Gastrocnemius medialis (tissue), 4 donors: ENCODE measurements at regions of chr15 and their contacts with region 1.

Region 1: DNA sequence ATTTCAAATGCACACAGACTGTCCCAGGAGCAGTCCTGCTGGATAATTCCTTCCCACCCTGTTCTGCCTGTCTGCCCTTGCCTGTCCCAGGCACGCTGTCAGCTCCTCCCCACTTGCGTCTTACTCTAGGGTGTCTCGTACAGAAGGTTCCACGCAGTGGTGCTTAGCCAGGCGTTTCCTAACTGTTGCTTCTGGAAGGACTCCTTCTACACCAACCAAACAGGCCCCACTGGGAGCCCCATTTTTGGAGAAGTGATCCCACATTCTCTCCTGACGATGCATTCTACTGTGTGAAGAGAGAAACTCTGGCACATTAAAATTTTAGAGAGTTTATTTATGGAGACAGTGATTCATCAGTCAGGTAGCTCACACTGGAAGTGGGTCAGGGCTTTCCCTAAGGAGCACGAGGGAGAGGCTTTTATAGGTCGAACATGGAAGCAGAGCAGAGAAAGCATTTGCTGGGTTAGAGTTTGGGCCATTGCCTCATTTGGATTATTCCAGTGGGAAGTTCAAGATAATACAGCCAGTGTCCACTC is 164.0 kb downstream of the SV2B start:
- DNase-seq: peak; percentile 76 to 90
- ATAC-seq: peak; percentile 96 to 98
- H3K4me3 ChIP-seq: peak overlapping the region; percentile 8 to 48 (median 34)
- H3K27ac ChIP-seq: peak overlapping the region; percentile 72 to 80 (median 76)
- H3K4me1 ChIP-seq: peaks cover 9 to 16% of the 10 kb centered on the region in 2 donors
- H3K27me3 ChIP-seq: no peaks in the 10 kb centered on the region
- CTCF ChIP-seq: no peak
- POLR2A ChIP-seq: peak; percentile 27 to 65

Region 2: DNA sequence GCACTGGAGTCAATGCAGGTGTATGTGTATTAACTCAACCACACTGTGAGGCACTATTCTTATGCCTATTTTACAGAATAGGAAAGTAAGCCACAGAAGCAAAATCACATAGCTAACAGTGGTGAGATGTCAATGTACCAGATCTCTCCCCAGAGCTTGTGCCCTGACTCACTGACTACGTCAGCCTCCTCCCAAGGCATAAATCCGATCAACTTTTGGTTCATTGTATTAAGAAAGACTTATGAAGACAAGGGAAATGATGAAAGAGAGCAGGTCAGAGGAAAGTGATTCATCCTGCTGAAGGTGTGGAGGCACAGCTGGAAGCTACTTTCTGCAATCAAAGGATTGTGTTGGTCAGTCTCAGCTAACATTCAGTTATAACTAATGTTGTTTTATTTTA is 197.0 kb before region 1 on chr15:
- in situ Hi-C with region 1: no loop called
- intact Hi-C with region 1: loop called (anchors 1 kb)
- DNase-seq: no peak
- ATAC-seq: no peak
- H3K4me3 ChIP-seq: no peak overlapping the region
- H3K27ac ChIP-seq: no peak overlapping the region
- H3K4me1 ChIP-seq: no peaks in the 10 kb centered on the region
- H3K27me3 ChIP-seq: peaks cover 0 to 7% (median 0%) of the 10 kb centered on the region in 3 donors
- CTCF ChIP-seq: no peak
- POLR2A ChIP-seq: no peak

Region 3: GRCh38 chr15:91118796-91119590 is 145.1 kb before region 1 on chr15:
- in situ Hi-C with region 1: no loop called
- intact Hi-C with region 1: loop called (anchors 1 kb)
- DNase-seq: peak; percentile 48 to 66
- ATAC-seq: peak; percentile 84 to 94
- H3K4me3 ChIP-seq: no peak overlapping the region
- H3K27ac ChIP-seq: peak overlapping the region; percentile 46 to 85 (median 57)
- H3K4me1 ChIP-seq: peaks cover 13 to 36% of the 10 kb centered on the region in 2 donors
- H3K27me3 ChIP-seq: no peaks in the 10 kb centered on the region
- CTCF ChIP-seq: no peak
- POLR2A ChIP-seq: no peak

Region 4: GRCh38 chr15:91216000-91216399 is 48.1 kb before region 1 on chr15:
- in situ Hi-C with region 1: no loop called
- intact Hi-C with region 1: loop called (anchors 2 kb)
- DNase-seq: peak; percentile 54 to 66
- ATAC-seq: peak; percentile 96
- H3K4me3 ChIP-seq: no peak overlapping the region
- H3K27ac ChIP-seq: peak overlapping the region; percentile 46 to 74 (median 71)
- H3K4me1 ChIP-seq: peaks cover 11 to 22% of the 10 kb centered on the region in 2 donors
- H3K27me3 ChIP-seq: no peaks in the 10 kb centered on the region
- CTCF ChIP-seq: no peak
- POLR2A ChIP-seq: no peak

Region 5: GRCh38 chr15:91320101-91320500 is 56.0 kb after region 1 on chr15:
- in situ Hi-C with region 1: no loop called
- intact Hi-C with region 1: no loop called
- DNase-seq: no peak
- ATAC-seq: no peak
- H3K4me3 ChIP-seq: no peak overlapping the region
- H3K27ac ChIP-seq: no peak overlapping the region
- H3K4me1 ChIP-seq: no peaks in the 10 kb centered on the region
- H3K27me3 ChIP-seq: no peaks in the 10 kb centered on the region
- CTCF ChIP-seq: no peak
- POLR2A ChIP-seq: no peak

Region 6: DNA sequence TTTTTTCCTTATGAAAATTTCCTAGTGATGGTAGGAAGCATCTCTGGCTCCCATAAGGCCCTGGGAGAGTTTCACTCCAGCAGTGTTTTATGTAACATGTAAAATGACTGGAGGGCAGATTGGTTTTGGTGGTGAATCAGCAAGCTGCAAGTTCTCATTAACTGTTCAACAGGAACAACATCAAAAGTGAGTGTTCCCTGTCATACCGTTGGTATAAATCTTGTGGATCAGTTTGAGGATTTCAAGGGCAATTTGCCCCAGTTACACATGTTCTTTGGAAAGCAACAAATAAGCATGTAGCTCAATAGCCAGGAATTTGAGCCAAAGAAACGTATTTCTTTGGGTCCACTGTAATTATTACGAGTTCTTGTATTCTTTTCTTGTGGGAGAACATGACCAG is 181.7 kb after region 1 on chr15:
- in situ Hi-C with region 1: no loop called
- intact Hi-C with region 1: no loop called
- DNase-seq: no peak
- ATAC-seq: no peak
- H3K4me3 ChIP-seq: no peak overlapping the region
- H3K27ac ChIP-seq: no peak overlapping the region
- H3K4me1 ChIP-seq: no peaks in the 10 kb centered on the region
- H3K27me3 ChIP-seq: no peaks in the 10 kb centered on the region
- CTCF ChIP-seq: no peak
- POLR2A ChIP-seq: no peak